Dendritic cell treated with granulocyte-macrophage colony-stimulating factor and Interleukin-4, amounts not matched to agents 40 ng/mL and 50 ng/mL, for 4 days (primary cell): ENCODE measurements at regions of chr16 and their contacts with region 1.

Region 1: DNA sequence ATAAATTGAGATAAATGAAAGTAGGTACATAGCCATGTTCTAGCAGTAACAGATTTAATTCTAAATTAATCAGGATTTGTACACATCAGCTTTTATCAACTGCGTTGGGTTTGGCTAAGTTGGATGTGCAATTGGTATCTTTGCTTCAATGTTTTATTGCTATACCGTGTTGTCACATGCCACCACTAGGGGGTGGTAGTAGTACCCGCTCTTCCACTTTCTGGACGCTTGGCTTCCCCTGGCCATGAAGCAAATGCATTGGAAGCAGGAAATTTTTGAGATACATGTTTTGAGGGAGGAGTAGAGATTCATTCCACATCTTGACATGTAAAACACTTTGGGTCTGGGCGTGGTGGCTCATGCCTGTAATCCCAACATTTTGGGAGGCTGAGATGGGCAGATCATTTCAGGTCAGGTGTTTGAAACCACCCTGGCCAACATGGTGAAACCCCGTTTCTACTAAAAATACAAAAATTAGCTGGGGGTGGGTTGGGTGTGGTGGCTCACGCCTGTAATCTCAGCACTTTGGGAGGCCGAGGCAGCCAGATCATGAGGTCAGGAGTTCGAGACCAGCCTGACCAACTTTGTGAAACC is 58.6 kb downstream of the EMP2 start:
- H3K4me3 Mint-ChIP-seq: no peak overlapping the region
- H3K27ac Mint-ChIP-seq: no peak overlapping the region
- H3K4me1 Mint-ChIP-seq: no peaks in the 10 kb centered on the region
- H3K27me3 Mint-ChIP-seq: peaks cover 4% of the 10 kb centered on the region

Region 2: DNA sequence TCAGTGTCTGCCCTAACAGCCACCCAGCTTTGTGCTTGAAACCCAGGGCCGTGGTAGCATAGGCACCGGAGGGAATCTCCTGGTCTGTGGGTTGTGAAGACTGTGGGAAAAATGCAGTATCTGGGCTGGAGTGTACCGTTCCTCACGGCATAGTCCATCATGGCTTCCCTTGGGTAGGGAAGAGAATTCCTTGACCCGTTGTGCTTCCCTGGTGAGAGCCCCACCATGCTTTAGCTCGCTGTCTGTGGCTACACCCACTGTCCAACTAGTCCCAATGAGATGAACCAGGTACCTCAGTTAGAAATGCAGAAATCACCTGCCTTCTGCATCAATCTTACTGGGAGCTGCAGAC is 68.6 kb before region 1 on chr16:
- intact Hi-C with region 1: no loop called
- H3K4me3 Mint-ChIP-seq: no peak overlapping the region
- H3K27ac Mint-ChIP-seq: no peak overlapping the region
- H3K4me1 Mint-ChIP-seq: no peaks in the 10 kb centered on the region
- H3K27me3 Mint-ChIP-seq: no peaks in the 10 kb centered on the region

Region 3: GRCh38 chr16:10466861-10467260 is 54.9 kb before region 1 on chr16:
- intact Hi-C with region 1: no loop called
- H3K4me3 Mint-ChIP-seq: no peak overlapping the region
- H3K27ac Mint-ChIP-seq: no peak overlapping the region
- H3K4me1 Mint-ChIP-seq: no peaks in the 10 kb centered on the region
- H3K27me3 Mint-ChIP-seq: no peaks in the 10 kb centered on the region

Region 4: GRCh38 chr16:10616730-10617555 is 95.2 kb after region 1 on chr16:
- intact Hi-C with region 1: loop called (anchors 10 kb)
- H3K4me3 Mint-ChIP-seq: no peak overlapping the region
- H3K27ac Mint-ChIP-seq: no peak overlapping the region
- H3K4me1 Mint-ChIP-seq: peaks cover 43% of the 10 kb centered on the region
- H3K27me3 Mint-ChIP-seq: peaks cover 19% of the 10 kb centered on the region